GM12878 (cell line): ENCODE measurements at regions of chr9 and their contacts with region 1.

Region 1: GRCh38 chr9:130815242-130815808 is 19.7 kb upstream of the ABL1 start:
- DNase-seq: no peak
- ATAC-seq: no peak
- H3K4me3 ChIP-seq: no peak overlapping the region
- H3K27ac ChIP-seq: no peak overlapping the region
- H3K4me1 ChIP-seq: peaks cover 7% of the 10 kb centered on the region
- H3K27me3 ChIP-seq: no peaks in the 10 kb centered on the region
- CTCF ChIP-seq: no peak
- EP300 ChIP-seq: no peak
- POLR2A ChIP-seq: no peak
- RAD21 ChIP-seq: no peak

Region 2: DNA sequence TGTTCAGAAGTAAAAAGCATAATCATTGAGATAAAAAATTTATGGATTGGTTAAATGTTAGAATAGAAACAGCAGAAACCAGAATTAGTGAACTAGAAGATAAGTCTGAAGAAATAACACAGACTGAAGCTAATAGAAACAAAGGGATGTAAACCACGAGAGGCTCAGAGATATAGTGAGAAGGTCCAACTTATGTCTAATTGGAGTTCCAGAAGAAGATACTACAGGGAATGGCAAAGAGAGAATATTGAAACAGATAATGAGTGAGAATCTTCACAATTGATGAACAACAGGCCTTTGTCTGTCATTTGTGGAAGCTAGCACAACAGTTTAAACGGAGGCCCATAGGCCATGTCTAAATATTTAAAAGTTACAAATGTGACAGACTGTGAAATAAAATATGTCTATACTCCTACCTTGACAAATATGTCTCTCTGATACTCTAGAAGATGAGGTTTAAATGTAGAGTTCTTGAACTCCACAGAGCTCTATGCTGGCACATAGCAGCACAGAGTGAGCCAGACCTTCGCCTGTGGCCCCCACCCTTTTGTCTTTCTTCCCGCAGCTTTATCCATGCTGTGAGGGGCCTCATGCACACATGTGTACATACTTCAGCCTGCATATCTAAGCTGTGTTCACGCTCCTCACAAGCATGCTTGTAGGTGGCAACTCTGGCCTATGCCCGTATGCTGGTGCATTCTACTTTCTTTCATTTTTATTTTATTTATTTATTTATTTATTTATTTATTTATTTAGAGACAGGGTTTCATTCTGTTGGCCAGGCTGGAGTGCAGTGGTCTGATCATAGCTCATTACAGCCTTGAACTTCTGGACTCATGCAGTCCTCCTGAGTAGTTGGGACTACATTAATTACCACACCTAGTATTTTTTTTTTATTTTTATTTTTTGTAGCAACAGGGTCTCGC is 25.3 kb before region 1 on chr9:
- CTCF ChIA-PET with region 1: no interaction called
- POLR2A ChIA-PET with region 1: no interaction called
- RAD21 ChIA-PET with region 1: no interaction called
- SMC1A ChIA-PET with region 1: no interaction called
- in situ Hi-C with region 1: no loop called
- intact Hi-C with region 1: loop called (anchors 1 kb)
- DNase-seq: no peak
- ATAC-seq: no peak
- H3K4me3 ChIP-seq: no peak overlapping the region
- H3K27ac ChIP-seq: no peak overlapping the region
- H3K4me1 ChIP-seq: peaks cover 18% of the 10 kb centered on the region; the same call in 1 of the 2 replicates
- H3K27me3 ChIP-seq: no peaks in the 10 kb centered on the region
- CTCF ChIP-seq: no peak
- EP300 ChIP-seq: no peak
- POLR2A ChIP-seq: no peak
- RAD21 ChIP-seq: no peak